ENCODE measurements at regions of chr16 and their contacts with region 1.

Region 1: DNA sequence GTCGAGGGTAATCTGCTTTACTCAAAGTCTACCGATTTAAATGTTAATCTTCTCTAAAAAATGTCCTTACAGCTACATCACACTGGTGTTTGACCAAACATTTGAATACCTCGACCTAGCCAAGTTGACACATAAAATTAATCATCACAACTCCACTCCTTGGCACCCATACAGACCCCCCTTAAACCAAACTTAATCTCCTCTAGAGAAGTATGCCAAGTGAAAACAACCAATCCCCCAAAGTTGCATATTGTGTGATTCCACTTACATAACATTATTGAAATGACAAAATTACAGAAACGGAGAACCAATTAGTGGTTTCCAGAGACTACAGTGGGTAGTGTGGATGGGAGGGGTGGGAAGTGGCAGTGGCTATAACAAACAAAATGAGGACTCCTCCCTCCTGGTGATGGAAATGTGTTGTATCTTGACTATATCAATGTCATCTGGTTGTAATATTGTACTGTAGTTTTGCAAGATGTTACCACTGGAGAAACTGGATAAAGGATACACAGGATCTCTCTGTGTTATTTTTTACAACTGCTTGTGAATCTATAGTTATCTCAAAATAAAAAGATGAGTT is 39.4 kb downstream of the CAPNS2 start:
- DNase-seq: no peak
- ATAC-seq: no peak
- H3K4me3 ChIP-seq: no peak overlapping the region
- H3K27ac ChIP-seq: no peak overlapping the region
- H3K4me1 ChIP-seq: no peaks in the 10 kb centered on the region
- H3K27me3 ChIP-seq: no peaks in the 10 kb centered on the region
- CTCF ChIP-seq: no peak
- EP300 ChIP-seq: no peak
- POLR2A ChIP-seq: no peak
- RAD21 ChIP-seq: no peak

Region 2: DNA sequence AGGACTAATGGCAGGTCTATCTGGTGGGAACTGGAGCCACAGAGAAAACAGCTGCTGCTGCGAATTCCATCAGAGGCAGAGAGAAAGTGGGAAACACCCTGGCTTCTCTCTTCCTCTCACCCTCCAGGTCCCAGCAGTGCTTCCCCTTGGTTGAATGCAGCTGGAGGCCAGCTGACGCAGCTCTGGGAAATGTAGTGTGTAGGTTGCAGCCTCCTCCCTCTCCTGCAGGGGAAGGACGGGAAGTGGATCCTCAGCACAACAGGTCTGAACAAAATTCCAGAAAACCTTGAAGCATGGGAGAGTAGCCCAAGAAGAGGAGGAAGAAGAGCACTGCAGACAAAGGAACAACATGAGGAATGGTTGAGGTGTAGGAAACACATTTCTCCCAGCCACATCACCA is 194.6 kb before region 1 on chr16:
- CTCF ChIA-PET with region 1: no interaction called
- POLR2A ChIA-PET with region 1: no interaction called
- RAD21 ChIA-PET with region 1: no interaction called
- SMC1A ChIA-PET with region 1: no interaction called
- in situ Hi-C with region 1: no loop called
- intact Hi-C with region 1: no loop called
- DNase-seq: no peak
- ATAC-seq: no peak
- H3K4me3 ChIP-seq: no peak overlapping the region
- H3K27ac ChIP-seq: no peak overlapping the region
- H3K4me1 ChIP-seq: no peaks in the 10 kb centered on the region
- H3K27me3 ChIP-seq: no peaks in the 10 kb centered on the region
- CTCF ChIP-seq: no peak
- EP300 ChIP-seq: no peak
- POLR2A ChIP-seq: no peak
- RAD21 ChIP-seq: no peak

Region 3: GRCh38 chr16:55543472-55543871 is 62.4 kb before region 1 on chr16:
- CTCF ChIA-PET with region 1: no interaction called
- POLR2A ChIA-PET with region 1: no interaction called
- RAD21 ChIA-PET with region 1: no interaction called
- SMC1A ChIA-PET with region 1: no interaction called
- in situ Hi-C with region 1: loop called (anchors 10 kb)
- intact Hi-C with region 1: no loop called
- DNase-seq: no peak
- ATAC-seq: no peak
- H3K4me3 ChIP-seq: no peak overlapping the region
- H3K27ac ChIP-seq: no peak overlapping the region
- H3K4me1 ChIP-seq: no peaks in the 10 kb centered on the region
- H3K27me3 ChIP-seq: no peaks in the 10 kb centered on the region
- CTCF ChIP-seq: no peak
- EP300 ChIP-seq: no peak
- POLR2A ChIP-seq: no peak
- RAD21 ChIP-seq: 0 out of 2 replicates have a peak, but pooled peaks have one; percentile 12

Region 4: GRCh38 chr16:55569025-55569424 is 36.8 kb before region 1 on chr16:
- CTCF ChIA-PET with region 1: no interaction called
- POLR2A ChIA-PET with region 1: no interaction called
- RAD21 ChIA-PET with region 1: no interaction called
- SMC1A ChIA-PET with region 1: no interaction called
- in situ Hi-C with region 1: no loop called
- intact Hi-C with region 1: no loop called
- DNase-seq: no peak
- ATAC-seq: no peak
- H3K4me3 ChIP-seq: no peak overlapping the region
- H3K27ac ChIP-seq: no peak overlapping the region
- H3K4me1 ChIP-seq: no peaks in the 10 kb centered on the region
- H3K27me3 ChIP-seq: no peaks in the 10 kb centered on the region
- CTCF ChIP-seq: no peak
- EP300 ChIP-seq: no peak
- POLR2A ChIP-seq: no peak
- RAD21 ChIP-seq: no peak